CD14-positive monocyte (primary cell): ENCODE measurements at regions of chrX and their contacts with region 1.

Region 1: GRCh38 chrX:107776649-107777535 is 641 bp upstream of the NCBP2L start:
- DNase-seq: peak; percentile 67 to 76 (median 72)
- H3K4me3 ChIP-seq: peak overlapping the region; percentile 30 to 72 (median 44)
- H3K4me3 Mint-ChIP-seq: peak overlapping the region; percentile 80 to 98
- H3K27ac ChIP-seq: no peak overlapping the region
- H3K27ac Mint-ChIP-seq: peak overlapping the region in 1 of 7 donors; percentile 37
- H3K4me1 ChIP-seq: peaks cover 19 to 23% of the 10 kb centered on the region in 2 donors
- H3K4me1 Mint-ChIP-seq: peaks cover 17% of the 10 kb centered on the region
- H3K27me3 ChIP-seq: peaks cover 12 to 32% of the 10 kb centered on the region in 2 donors
- H3K27me3 Mint-ChIP-seq: peaks cover 21 to 38% (median 34%) of the 10 kb centered on the region in 3 donors
- CTCF ChIP-seq: peak; percentile 61

Region 2: DNA sequence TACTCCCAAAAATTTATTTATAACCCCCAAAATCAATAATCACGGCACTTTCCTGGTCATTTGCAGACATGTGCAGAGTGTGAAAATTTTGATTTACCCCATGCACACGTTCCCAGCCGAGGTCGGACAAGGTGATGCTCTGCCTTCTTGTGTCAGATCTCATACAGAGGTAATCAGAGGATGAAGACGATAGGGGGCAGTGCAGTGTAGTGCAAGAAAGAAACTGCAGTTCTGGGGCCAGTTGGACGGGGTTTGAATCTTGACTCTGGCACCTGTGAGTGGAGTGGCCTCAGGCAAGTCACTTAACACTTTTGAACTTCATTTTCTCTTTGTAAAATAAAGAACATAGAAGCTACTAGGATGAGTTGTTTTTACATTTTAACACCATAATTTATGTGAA is 239.1 kb before region 1 on chrX:
- intact Hi-C with region 1: loop called in 1 of 2 experiments (anchors 5 kb)
- DNase-seq: peak in 1 of 3 donors; percentile 2
- H3K4me3 ChIP-seq: no peak overlapping the region
- H3K4me3 Mint-ChIP-seq: no peak overlapping the region
- H3K27ac ChIP-seq: no peak overlapping the region
- H3K27ac Mint-ChIP-seq: no peak overlapping the region
- H3K4me1 ChIP-seq: no peaks in the 10 kb centered on the region
- H3K4me1 Mint-ChIP-seq: no peaks in the 10 kb centered on the region
- H3K27me3 ChIP-seq: no peaks in the 10 kb centered on the region
- H3K27me3 Mint-ChIP-seq: peaks cover 0 to 14% (median 2%) of the 10 kb centered on the region in 3 donors
- CTCF ChIP-seq: peak; percentile 17

Region 3: DNA sequence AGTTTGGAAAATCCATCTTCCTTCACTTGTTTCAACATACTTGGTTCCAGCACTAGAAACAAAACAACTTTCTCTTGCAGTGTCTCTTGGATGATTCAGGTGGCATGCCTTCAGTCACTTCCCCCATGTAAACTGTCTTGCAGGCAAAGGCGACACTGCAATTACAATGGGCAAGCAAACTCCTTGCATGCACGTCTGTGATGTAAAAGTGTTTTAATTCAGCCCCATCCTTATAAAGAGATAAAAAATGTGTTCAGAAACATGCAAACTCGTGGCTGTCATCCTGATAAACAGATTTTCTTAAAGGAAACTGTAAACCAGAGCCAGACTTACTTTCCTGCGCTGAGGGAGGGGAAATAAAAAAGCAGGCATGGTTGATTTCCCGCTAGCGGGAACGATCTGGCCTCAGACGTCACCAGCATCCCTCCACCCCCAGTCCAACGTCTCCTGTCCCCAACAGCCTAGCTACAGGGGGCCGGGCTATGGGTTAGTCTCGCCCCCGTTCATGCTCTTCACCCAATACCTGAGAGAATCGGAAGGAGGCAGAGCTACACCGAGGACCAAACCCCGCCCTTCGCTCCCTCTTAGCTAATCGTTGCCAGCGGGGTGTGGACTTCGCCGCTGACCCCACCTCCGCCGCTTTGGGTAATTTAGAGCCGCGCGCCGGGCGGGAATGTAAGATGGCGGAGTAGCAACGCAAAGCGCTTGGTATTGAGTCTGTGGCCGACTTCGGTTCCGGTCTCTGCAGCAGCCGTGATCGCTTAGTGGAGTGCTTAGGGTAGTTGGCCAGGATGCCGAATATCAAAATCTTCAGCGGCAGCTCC is 148.8 kb before region 1 on chrX and contains the start of gene PRPS1:
- intact Hi-C with region 1: no loop called
- DNase-seq: peak; percentile 78 to 82 (median 82)
- H3K4me3 ChIP-seq: peak within 1 kb of the TSS; percentile 61 to 85 (median 76)
- H3K4me3 Mint-ChIP-seq: peak within 1 kb of the TSS; percentile 91 to 92
- H3K27ac ChIP-seq: peak within 1 kb of the TSS in 1 of 2 donors; percentile 78
- H3K27ac Mint-ChIP-seq: peak within 1 kb of the TSS; percentile 77 to 91 (median 87)
- H3K4me1 ChIP-seq: peaks cover 17 to 20% of the 10 kb centered on the region in 2 donors
- H3K4me1 Mint-ChIP-seq: peaks cover 21% of the 10 kb centered on the region
- H3K27me3 ChIP-seq: no peaks in the 10 kb centered on the region
- H3K27me3 Mint-ChIP-seq: peaks cover 0 to 2% (median 0%) of the 10 kb centered on the region in 3 donors
- CTCF ChIP-seq: no peak
- polyA plus RNA-seq, gene PRPS1: 10.4 to 11.8 (median 11.4) TPM

Region 4: GRCh38 chrX:107654872-107655761 is 121.8 kb before region 1 on chrX:
- intact Hi-C with region 1: loop called (anchors 5 kb)
- DNase-seq: peak; percentile 23 to 47 (median 25)
- H3K4me3 ChIP-seq: no peak overlapping the region
- H3K4me3 Mint-ChIP-seq: peak overlapping the region in 1 of 2 donors; percentile 15
- H3K27ac ChIP-seq: no peak overlapping the region
- H3K27ac Mint-ChIP-seq: peak overlapping the region in 4 of 7 donors; percentile 51 to 76 (median 58)
- H3K4me1 ChIP-seq: peaks cover 10 to 11% of the 10 kb centered on the region in 2 donors
- H3K4me1 Mint-ChIP-seq: peaks cover 12% of the 10 kb centered on the region
- H3K27me3 ChIP-seq: no peaks in the 10 kb centered on the region
- H3K27me3 Mint-ChIP-seq: peaks cover 0 to 15% (median 0%) of the 10 kb centered on the region in 3 donors
- CTCF ChIP-seq: peak; percentile 85

Region 5: GRCh38 chrX:107716816-107717700 is 59.8 kb before region 1 on chrX:
- intact Hi-C with region 1: loop called in 1 of 2 experiments (anchors 5 kb)
- DNase-seq: peak; percentile 84 to 91 (median 90)
- H3K4me3 ChIP-seq: peak overlapping the region; percentile 66 to 99 (median 94)
- H3K4me3 Mint-ChIP-seq: peak overlapping the region; percentile 93 to 96
- H3K27ac ChIP-seq: peak overlapping the region; percentile 53 to 95
- H3K27ac Mint-ChIP-seq: peak overlapping the region; percentile 89 to 99 (median 93)
- H3K4me1 ChIP-seq: peaks cover 60 to 62% of the 10 kb centered on the region in 2 donors
- H3K4me1 Mint-ChIP-seq: peaks cover 53% of the 10 kb centered on the region
- H3K27me3 ChIP-seq: no peaks in the 10 kb centered on the region
- H3K27me3 Mint-ChIP-seq: peaks cover 0 to 21% (median 2%) of the 10 kb centered on the region in 3 donors
- CTCF ChIP-seq: no peak